Common myeloid progenitor, CD34-positive (primary cell): ENCODE measurements at regions of chr12 and their contacts with region 1.

Region 1: DNA sequence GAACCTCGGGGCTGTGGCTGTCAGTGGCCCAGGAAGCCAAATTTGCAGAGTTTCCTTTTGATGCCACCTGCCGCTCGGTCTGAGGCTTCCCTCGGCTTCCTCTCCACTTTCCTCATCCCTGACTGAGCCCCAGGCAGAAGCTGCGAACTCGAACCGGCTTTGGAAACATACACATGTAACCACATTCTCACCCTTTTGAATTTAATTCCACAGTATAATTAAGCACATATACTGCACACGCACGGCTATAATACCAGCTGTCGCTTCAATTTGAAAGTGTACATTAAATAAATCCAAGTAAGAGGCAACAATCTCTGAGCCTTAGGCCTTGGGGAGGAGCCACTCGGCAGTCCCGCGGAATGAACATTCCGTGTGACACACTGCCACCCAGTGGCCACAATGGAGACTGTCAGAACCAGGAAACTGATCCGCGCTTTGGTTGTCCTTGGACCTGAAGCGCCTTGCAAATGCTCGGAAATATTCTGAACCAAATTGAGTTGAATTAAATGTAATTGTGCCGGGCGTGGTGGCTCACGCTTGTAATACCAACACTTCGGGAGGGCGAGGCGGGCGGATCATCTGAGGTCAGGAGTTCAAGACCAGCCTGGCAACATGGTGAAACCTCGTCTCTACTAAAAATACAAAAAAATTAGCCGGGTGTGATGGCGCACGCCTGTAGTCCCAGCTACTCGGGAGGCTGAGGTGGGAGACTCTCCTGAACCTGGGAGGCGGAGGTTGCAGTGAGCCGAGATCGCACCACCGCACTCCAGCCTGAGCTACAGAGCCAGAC is 117.9 kb upstream of the TMPO start:
- DNase-seq: peak; percentile 77 to 89 (median 86)
- H3K4me3 ChIP-seq: peak overlapping the region in 6 of 7 experiments; percentile 20 to 71 (median 60)
- H3K27ac ChIP-seq: no peak overlapping the region
- H3K4me1 ChIP-seq: peaks cover 11 to 45% (median 24%) of the 10 kb centered on the region in 4 experiments
- H3K27me3 ChIP-seq: no peaks in the 10 kb centered on the region

Region 2: GRCh38 chr12:98373025-98373554 is 24.4 kb before region 1 on chr12:
- CTCF ChIA-PET with region 1: interaction called, 30 read pairs
- POLR2A ChIA-PET with region 1: no interaction called
- DNase-seq: peak; percentile 37 to 59 (median 55)
- H3K4me3 ChIP-seq: no peak overlapping the region
- H3K27ac ChIP-seq: no peak overlapping the region
- H3K4me1 ChIP-seq: peaks cover 1 to 36% (median 16%) of the 10 kb centered on the region in 4 experiments
- H3K27me3 ChIP-seq: peaks cover 0 to 2% (median 0%) of the 10 kb centered on the region in 5 experiments